ENCODE measurements at regions of chr1 and their contacts with region 1.

Region 1: GRCh38 chr1:65265651-65266351 is 43.5 kb upstream of the DNAJC6 start:
- DNase-seq: peak; percentile 49
- ATAC-seq: peak; percentile 31
- H3K4me3 Mint-ChIP-seq: peak overlapping the region; percentile 55
- H3K27ac Mint-ChIP-seq: peak overlapping the region; percentile 51
- H3K4me1 Mint-ChIP-seq: peaks cover 23% of the 10 kb centered on the region
- H3K27me3 Mint-ChIP-seq: peaks cover 27% of the 10 kb centered on the region

Region 2: GRCh38 chr1:65393347-65393746 is 127.5 kb after region 1 on chr1:
- CTCF ChIA-PET with region 1: no interaction called
- POLR2A ChIA-PET with region 1: no interaction called
- intact Hi-C with region 1: loop called in 1 of 2 experiments (anchors 10 kb)
- DNase-seq: peak; percentile 45
- ATAC-seq: peak; percentile 87
- H3K4me3 Mint-ChIP-seq: no peak overlapping the region
- H3K27ac Mint-ChIP-seq: peak overlapping the region; percentile 28
- H3K4me1 Mint-ChIP-seq: peaks cover 57% of the 10 kb centered on the region
- H3K27me3 Mint-ChIP-seq: no peaks in the 10 kb centered on the region

Measured in activated CD4-positive, alpha-beta T cell treated with anti-CD3 and anti-CD28 coated beads for 36 hours (primary cell).